Activated CD4-positive, alpha-beta T cell treated with anti-CD3 and anti-CD28 coated beads, Interleukin-2, amount 10 ng/mL, durations not matched to agents 7 days and 5 days (primary cell): ENCODE measurements at regions of chr1 and their contacts with region 1.

Region 1: DNA sequence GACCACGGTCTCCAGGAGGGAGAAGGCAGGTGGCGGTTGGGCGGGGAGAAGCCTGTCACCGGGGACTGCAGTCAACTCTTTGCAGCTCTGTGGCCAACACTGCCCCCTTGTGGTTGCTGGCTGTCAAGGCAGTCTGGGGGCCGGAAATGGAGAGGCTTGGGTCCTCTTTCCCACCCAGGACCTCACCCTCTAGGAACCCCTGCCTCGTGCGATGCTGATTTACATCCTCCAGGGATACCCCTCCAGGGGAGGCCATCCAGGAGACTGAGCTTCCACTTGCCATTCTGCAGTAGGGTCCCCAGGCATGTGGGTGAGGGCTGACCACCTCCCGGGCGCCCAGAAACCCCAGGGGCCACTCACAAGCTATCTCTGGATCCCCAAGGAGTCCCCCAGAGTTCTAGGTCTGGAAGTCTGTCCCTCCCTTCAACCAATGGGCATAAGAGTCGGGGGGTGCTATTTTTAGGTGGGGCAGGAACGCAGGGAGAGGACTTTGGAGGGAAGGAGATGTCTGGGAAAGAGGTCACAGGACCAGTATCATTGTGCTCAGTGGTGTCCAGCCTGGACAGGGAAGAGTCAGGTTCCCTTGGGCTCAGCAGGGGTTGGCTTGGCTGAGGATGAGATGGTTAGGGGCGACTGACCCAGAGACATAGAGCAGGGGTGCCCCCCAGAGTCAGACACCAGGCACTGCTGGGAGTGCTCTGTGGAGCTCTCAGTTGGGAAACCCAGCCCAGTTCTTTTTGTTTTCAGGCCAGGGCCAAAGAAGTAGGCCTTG is 7.1 kb upstream of the GPR61 start:
- DNase-seq: peak; percentile 94
- H3K4me3 Mint-ChIP-seq: peak overlapping the region; percentile 40
- H3K27ac Mint-ChIP-seq: peak overlapping the region; percentile 96
- H3K4me1 Mint-ChIP-seq: peaks cover 37% of the 10 kb centered on the region
- H3K27me3 Mint-ChIP-seq: no peaks in the 10 kb centered on the region

Region 2: GRCh38 chr1:109204484-109204883 is 328.1 kb before region 1 on chr1:
- CTCF ChIA-PET with region 1: interaction called, 11 read pairs
- POLR2A ChIA-PET with region 1: no interaction called
- DNase-seq: no peak
- H3K4me3 Mint-ChIP-seq: no peak overlapping the region
- H3K27ac Mint-ChIP-seq: no peak overlapping the region
- H3K4me1 Mint-ChIP-seq: peaks cover 20% of the 10 kb centered on the region
- H3K27me3 Mint-ChIP-seq: no peaks in the 10 kb centered on the region

Region 3: GRCh38 chr1:109263597-109264398 is 268.8 kb before region 1 on chr1:
- CTCF ChIA-PET with region 1: interaction called, 14 read pairs
- POLR2A ChIA-PET with region 1: no interaction called
- DNase-seq: peak; percentile 82
- H3K4me3 Mint-ChIP-seq: no peak overlapping the region
- H3K27ac Mint-ChIP-seq: no peak overlapping the region
- H3K4me1 Mint-ChIP-seq: peaks cover 3% of the 10 kb centered on the region
- H3K27me3 Mint-ChIP-seq: no peaks in the 10 kb centered on the region

Region 4: GRCh38 chr1:109397538-109398342 is 134.8 kb before region 1 on chr1 and contains the start of gene SORT1:
- CTCF ChIA-PET with region 1: interaction called, 12 read pairs
- POLR2A ChIA-PET with region 1: no interaction called
- DNase-seq: peak; percentile 39
- H3K4me3 Mint-ChIP-seq: peak within 1 kb of the TSS; percentile 75
- H3K27ac Mint-ChIP-seq: no peak within 1 kb of the TSS
- H3K4me1 Mint-ChIP-seq: peaks cover 10% of the 10 kb centered on the region
- H3K27me3 Mint-ChIP-seq: peaks cover 42% of the 10 kb centered on the region
- total RNA-seq, gene SORT1: 1.5 to 1.9 TPM

Region 5: DNA sequence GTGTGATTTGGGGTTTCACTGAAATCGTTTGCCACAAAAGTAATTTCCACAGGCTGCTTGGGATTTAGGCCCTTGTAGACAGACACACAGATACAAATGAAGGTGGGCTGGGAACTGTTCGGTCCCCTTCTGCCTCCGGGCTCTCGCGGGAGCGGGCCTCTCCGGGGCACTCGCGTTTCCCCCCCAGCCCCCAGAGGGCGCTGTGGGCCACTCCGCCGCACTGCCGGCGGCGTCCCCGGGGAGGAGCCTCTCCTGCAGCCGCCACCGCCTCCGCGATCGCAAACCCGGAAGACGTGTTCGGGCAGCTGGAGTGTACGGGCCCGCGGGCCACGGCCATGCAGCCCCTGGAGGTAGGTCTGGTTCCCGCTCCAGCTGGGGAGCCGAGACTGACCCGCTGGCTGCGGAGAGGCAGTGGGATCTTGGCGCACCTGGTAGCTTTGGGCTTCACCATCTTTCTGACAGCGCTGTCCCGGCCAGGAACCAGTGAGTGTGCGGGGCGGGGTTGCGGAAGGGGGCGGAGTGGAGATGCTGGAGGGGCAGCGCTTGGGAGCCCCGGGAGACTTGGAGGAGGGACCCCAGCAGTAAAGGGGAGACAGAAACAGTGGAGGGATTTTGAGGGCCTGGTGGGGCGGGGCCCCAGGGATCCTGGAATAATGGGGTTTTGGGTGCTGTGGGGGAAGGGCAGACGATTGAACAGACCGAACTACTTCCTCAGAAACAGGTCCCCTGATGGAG is 38.6 kb before region 1 on chr1 and contains the start of gene CYB561D1:
- CTCF ChIA-PET with region 1: interaction called, 1,139 read pairs
- POLR2A ChIA-PET with region 1: interaction called, 4 read pairs
- DNase-seq: peak; percentile 91
- H3K4me3 Mint-ChIP-seq: peak within 1 kb of the TSS; percentile 98
- H3K27ac Mint-ChIP-seq: peak within 1 kb of the TSS; percentile 89
- H3K4me1 Mint-ChIP-seq: peaks cover 56% of the 10 kb centered on the region
- H3K27me3 Mint-ChIP-seq: no peaks in the 10 kb centered on the region
- total RNA-seq, gene CYB561D1: 25.3 to 29.7 TPM

Region 6: DNA sequence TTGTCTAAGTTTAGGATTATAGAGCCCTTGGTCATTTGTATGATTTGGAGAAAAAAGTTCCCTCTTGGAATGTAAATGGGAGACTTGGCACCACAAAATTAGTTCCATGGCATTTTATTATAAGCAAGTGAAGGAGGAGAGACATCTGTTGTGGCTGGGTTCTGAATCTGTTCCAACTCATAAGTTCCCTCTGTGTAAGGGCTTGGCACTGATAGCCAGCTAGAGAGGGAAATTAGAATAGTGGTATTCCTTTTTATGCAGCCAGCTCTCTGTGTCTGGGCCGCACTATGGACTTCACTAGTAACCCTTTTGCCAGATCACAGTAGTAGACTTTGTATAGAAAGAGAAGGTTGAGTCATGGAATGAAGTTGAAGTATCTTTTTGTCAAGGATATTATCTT is 46.9 kb after region 1 on chr1:
- CTCF ChIA-PET with region 1: no interaction called
- POLR2A ChIA-PET with region 1: no interaction called
- DNase-seq: no peak
- H3K4me3 Mint-ChIP-seq: no peak overlapping the region
- H3K27ac Mint-ChIP-seq: no peak overlapping the region
- H3K4me1 Mint-ChIP-seq: no peaks in the 10 kb centered on the region
- H3K27me3 Mint-ChIP-seq: no peaks in the 10 kb centered on the region

Region 7: GRCh38 chr1:109620841-109621286 is 88.3 kb after region 1 on chr1:
- CTCF ChIA-PET with region 1: interaction called, 10 read pairs
- POLR2A ChIA-PET with region 1: no interaction called
- DNase-seq: peak; percentile 99
- H3K4me3 Mint-ChIP-seq: peak overlapping the region; percentile 84
- H3K27ac Mint-ChIP-seq: peak overlapping the region; percentile 94
- H3K4me1 Mint-ChIP-seq: peaks cover 71% of the 10 kb centered on the region
- H3K27me3 Mint-ChIP-seq: no peaks in the 10 kb centered on the region

Region 8: DNA sequence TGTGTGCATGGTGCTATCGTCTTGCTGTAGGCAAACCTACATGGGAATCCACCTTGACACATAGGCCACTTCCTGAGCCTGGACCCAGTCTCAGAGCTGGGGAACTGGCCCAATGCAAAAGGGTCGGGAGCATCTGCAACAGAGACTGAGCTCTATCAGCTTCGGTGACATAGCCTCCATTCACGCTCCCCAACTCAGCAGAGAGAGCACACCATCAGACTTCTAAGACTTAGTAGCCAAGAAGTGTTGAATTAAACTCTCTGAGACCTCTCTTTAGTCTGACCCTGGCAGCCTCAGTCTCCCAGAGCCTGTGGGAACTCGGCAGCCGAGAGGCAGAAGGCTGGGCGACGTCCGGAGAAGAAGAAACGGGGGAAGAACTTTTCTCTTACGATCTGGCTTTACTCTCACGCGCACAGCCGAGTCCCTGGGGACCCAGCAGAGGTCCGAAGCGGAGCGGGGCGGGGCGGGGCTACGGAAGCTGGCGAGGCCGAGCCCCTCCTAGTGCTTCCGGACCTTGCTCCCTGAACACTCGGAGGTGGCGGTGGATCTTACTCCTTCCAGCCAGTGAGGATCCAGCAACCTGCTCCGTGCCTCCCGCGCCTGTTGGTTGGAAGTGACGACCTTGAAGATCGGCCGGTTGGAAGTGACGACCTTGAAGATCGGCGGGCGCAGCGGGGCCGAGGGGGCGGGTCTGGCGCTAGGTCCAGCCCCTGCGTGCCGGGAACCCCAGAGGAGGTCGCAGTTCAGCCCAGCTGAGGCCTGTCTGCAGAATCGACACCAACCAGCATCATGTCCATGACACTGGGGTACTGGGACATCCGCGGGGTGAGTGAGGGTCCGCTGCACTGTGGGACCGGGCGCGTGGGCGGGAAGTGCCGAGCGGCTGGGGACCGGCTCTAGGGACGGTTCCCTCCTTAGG is 123.3 kb after region 1 on chr1 and contains the start of gene GSTM4:
- CTCF ChIA-PET with region 1: no interaction called
- POLR2A ChIA-PET with region 1: no interaction called
- DNase-seq: peak; percentile 76
- H3K4me3 Mint-ChIP-seq: peak within 1 kb of the TSS; percentile 82
- H3K27ac Mint-ChIP-seq: peak within 1 kb of the TSS; percentile 91
- H3K4me1 Mint-ChIP-seq: peaks cover 26% of the 10 kb centered on the region
- H3K27me3 Mint-ChIP-seq: peaks cover 21% of the 10 kb centered on the region
- total RNA-seq, gene GSTM4: 34.3 to 36.3 TPM

Region 9: GRCh38 chr1:109732390-109732881 is 199.9 kb after region 1 on chr1:
- CTCF ChIA-PET with region 1: no interaction called
- POLR2A ChIA-PET with region 1: no interaction called
- DNase-seq: no peak
- H3K4me3 Mint-ChIP-seq: no peak overlapping the region
- H3K27ac Mint-ChIP-seq: no peak overlapping the region
- H3K4me1 Mint-ChIP-seq: no peaks in the 10 kb centered on the region
- H3K27me3 Mint-ChIP-seq: no peaks in the 10 kb centered on the region